H1 (cell line): ENCODE measurements at regions of chr2 and their contacts with region 1.

Region 1: DNA sequence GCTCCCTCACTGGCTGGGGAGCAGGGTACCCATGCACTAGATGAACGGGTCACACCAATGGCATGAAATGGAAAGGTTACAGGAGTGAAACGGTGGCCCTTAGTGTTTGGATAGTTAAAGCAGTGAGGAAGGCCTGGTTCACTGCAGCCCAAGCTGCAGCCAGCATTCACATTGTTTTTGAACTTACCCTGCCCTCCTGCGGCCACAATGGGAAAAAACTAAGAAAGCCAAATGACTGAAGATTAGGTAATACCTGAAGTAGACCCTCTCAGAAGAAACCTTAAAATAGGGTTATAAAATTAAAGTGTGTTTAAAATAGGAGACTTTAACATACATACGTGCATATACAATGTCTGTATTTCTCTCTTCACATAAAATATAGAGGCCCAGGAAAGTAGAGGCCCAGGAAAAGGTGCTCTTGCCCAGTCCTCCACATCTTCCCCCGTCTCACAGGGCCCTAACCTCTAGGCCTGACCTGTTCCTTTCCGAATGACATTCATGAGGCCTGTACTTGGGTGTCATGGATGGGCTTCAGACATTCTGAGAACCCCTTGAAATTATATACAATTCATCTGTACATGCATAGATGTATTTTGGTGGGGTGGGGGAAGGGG is 33.3 kb downstream of the DOK1 start:
- DNase-seq: peak; percentile 33 to 66
- H3K4me3 ChIP-seq: no peak overlapping the region
- H3K27ac ChIP-seq: no peak overlapping the region
- H3K4me1 ChIP-seq: peaks cover 0 to 2% (median under 1%) of the 10 kb centered on the region in 4 experiments; a peak in 1 of 7 replicates
- H3K27me3 ChIP-seq: no peaks in the 10 kb centered on the region
- CTCF ChIP-seq: peak; percentile 26 to 71 (median 70)
- EP300 ChIP-seq: no peak
- POLR2A ChIP-seq: no peak
- RAD21 ChIP-seq: peak; percentile 89 to 90

Region 2: GRCh38 chr2:74472086-74472944 is 115.5 kb before region 1 on chr2 and contains the start of gene MRPL53:
- CTCF ChIA-PET with region 1: interaction called, 42 read pairs
- POLR2A ChIA-PET with region 1: no interaction called
- DNase-seq: peak; percentile 84 to 94
- H3K4me3 ChIP-seq: peak within 1 kb of the TSS; percentile 77 to 95 (median 87)
- H3K27ac ChIP-seq: peak within 1 kb of the TSS; percentile 79
- H3K4me1 ChIP-seq: peaks cover 0 to 3% (median 2%) of the 10 kb centered on the region in 4 experiments; a peak in 3 of 7 replicates
- H3K27me3 ChIP-seq: no peaks in the 10 kb centered on the region
- CTCF ChIP-seq: no peak
- EP300 ChIP-seq: 0 out of 3 replicates have a peak, but pooled peaks of 1 of the 2 experiments have one; percentile 46
- POLR2A ChIP-seq: peak; percentile 80 to 95
- RAD21 ChIP-seq: no peak
- total RNA-seq, gene MRPL53: 46.3 and 50.2 TPM in 2 replicates

Region 3: GRCh38 chr2:74488644-74489481 is 98.9 kb before region 1 on chr2:
- CTCF ChIA-PET with region 1: interaction called, 45 read pairs
- POLR2A ChIA-PET with region 1: no interaction called
- DNase-seq: no peak
- H3K4me3 ChIP-seq: no peak overlapping the region
- H3K27ac ChIP-seq: no peak overlapping the region
- H3K4me1 ChIP-seq: no peaks in the 10 kb centered on the region
- H3K27me3 ChIP-seq: no peaks in the 10 kb centered on the region
- CTCF ChIP-seq: no peak
- EP300 ChIP-seq: no peak
- POLR2A ChIP-seq: no peak
- RAD21 ChIP-seq: no peak

Region 4: DNA sequence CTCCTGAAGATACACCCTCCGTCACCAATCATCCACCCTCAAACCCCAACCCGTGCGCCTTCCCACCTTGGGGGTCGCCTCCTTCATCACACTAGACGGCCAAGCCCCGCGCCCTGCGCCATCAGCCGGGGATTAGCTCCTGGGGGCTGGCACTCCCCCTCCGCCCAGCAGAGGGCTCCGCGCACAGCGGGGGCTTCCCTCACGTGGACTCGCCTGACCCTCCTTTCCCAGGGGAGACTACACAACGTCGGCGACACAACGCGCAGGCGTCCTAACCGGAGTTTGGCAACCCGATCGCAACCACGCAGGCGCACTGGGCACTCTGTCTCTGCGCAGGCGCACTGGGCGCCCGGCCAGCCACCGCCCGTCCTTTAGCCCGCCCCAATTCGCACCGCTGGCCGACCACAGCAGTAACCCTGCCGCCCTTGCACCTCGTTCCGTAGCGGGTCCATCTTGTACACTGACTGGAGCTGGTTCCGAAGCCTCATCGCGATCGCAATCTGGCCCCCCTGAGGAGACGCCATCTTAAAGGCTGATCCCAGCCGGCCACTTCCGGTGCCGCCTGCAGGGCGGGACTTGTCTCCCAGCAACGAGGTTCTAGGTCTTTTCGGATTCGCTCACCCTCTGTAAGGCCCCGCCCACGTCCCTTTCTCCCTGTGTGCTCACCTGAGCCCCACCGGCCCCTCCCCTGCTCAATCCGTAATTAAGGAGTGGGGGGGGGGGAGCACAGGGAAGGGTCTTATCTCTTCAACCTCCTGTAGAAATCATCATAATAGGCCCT is 80.4 kb before region 1 on chr2 and contains the start of gene PCGF1:
- CTCF ChIA-PET with region 1: interaction called, 16 read pairs
- POLR2A ChIA-PET with region 1: interaction called, 4 read pairs
- DNase-seq: peak; percentile 96 to 98
- H3K4me3 ChIP-seq: peak within 1 kb of the TSS; percentile 61 to 98 (median 92)
- H3K27ac ChIP-seq: peak within 1 kb of the TSS; percentile 99
- H3K4me1 ChIP-seq: peaks cover 3 to 25% (median 20%) of the 10 kb centered on the region in 4 experiments
- H3K27me3 ChIP-seq: peaks cover 48 to 80% (median 76%) of the 10 kb centered on the region in 4 experiments
- CTCF ChIP-seq: peak in 2 of 3 experiments; percentile 48 to 63; a peak in 3 of 4 replicates
- EP300 ChIP-seq: no peak
- POLR2A ChIP-seq: peak in 1 of 2 experiments; percentile 84; a peak in 2 of 3 replicates
- RAD21 ChIP-seq: peak; percentile 9 to 28; a peak in 1 of 4 replicates
- total RNA-seq, gene PCGF1: 10.0 and 13.8 TPM in 2 replicates

Region 5: DNA sequence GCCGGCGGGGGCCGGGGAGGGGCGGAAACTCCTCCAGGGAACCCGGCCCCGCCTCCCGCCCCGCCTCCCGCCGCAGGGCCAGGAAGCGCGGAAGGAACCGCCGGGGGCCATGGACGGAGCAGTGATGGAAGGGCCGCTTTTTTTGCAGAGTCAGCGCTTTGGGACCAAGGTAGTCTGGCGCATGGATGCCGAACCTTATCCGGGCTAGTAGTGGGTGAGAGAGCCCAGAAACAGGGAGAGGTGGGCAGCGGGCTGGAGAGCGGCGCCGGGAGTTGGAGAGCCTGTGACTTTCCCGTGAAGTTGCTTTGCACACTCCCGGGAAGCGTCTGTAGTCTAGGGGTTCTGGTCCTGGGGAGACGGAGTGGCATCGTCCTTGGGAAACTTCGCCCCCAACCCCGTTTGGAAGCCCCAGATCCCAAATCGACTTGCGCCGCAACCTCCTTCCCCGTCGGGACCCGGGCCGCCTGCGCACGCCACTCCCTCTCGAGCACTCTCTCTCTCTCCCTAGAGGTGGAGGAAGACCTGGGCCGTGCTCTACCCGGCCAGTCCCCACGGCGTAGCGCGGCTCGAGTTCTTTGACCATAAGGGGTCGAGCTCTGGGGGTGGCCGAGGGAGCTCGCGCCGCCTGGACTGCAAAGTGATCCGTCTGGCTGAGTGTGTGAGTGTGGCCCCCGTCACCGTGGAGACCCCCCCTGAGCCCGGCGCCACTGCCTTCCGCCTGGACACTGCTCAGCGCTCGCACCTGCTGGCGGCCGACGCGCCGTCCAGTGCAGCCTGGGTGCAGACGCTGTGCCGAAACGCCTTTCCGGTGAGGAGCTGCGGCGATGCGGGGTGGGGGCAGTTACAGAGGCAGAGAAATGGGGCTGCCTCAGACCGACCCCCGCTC is 32.9 kb before region 1 on chr2 and contains the start of gene DOK1:
- CTCF ChIA-PET with region 1: interaction called, 56 read pairs
- POLR2A ChIA-PET with region 1: interaction called, 5 read pairs
- DNase-seq: peak in 1 of 2 experiments; percentile 76
- H3K4me3 ChIP-seq: peak within 1 kb of the TSS; percentile 83 to 94 (median 90)
- H3K27ac ChIP-seq: 0 out of 2 replicates have a peak within 1 kb of the TSS, but pooled peaks have one; percentile 11
- H3K4me1 ChIP-seq: peaks cover 2 to 10% (median 7%) of the 10 kb centered on the region in 4 experiments
- H3K27me3 ChIP-seq: peaks cover 4 to 50% (median 33%) of the 10 kb centered on the region in 4 experiments
- CTCF ChIP-seq: no peak
- EP300 ChIP-seq: no peak
- POLR2A ChIP-seq: no peak; a peak in 1 of 3 replicates
- RAD21 ChIP-seq: no peak
- total RNA-seq, gene DOK1: 11.4 and 14.3 TPM in 2 replicates

Region 6: DNA sequence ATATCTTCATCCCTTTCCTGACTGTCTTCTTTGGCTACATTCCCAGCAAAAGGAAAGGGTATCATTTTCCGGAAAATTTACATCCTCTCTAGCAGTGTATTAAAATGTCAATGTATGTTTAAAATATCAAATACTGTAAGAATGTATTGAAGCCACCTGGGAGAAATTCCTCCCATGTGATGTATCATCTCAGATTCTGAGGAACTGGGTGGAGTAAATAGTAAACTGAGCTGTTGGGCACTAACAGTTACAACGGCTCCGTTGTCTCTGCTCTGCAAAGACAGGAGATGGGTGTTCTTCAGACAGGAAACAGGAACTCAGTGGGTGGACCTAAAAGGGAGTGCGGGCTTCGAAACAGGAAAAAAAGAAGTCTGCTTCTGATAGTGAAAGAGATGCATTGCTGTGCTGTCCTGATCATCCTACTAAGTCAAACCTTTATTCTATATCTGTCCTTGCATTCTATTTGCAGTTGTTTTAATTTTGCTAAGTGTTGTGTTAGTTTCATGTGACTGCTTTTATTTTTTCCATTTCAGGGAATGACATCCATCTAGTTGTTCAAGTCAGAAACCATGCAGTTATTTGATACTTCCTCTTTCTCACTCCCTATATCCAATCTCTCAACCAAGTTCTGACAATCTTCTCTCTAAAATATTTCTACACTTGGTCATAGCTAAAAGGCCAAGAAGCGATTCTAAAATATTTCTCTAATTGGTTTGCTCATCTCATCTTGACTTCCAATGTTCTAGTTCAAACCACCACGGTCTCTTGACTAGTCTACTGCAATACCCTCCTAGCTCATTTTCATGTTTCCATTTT is 13.8 kb before region 1 on chr2:
- CTCF ChIA-PET with region 1: interaction called, 158 read pairs
- POLR2A ChIA-PET with region 1: interaction called, 5 read pairs
- DNase-seq: no peak
- H3K4me3 ChIP-seq: no peak overlapping the region
- H3K27ac ChIP-seq: no peak overlapping the region
- H3K4me1 ChIP-seq: no peaks in the 10 kb centered on the region
- H3K27me3 ChIP-seq: no peaks in the 10 kb centered on the region
- CTCF ChIP-seq: no peak
- EP300 ChIP-seq: no peak
- POLR2A ChIP-seq: no peak
- RAD21 ChIP-seq: no peak

Region 7: DNA sequence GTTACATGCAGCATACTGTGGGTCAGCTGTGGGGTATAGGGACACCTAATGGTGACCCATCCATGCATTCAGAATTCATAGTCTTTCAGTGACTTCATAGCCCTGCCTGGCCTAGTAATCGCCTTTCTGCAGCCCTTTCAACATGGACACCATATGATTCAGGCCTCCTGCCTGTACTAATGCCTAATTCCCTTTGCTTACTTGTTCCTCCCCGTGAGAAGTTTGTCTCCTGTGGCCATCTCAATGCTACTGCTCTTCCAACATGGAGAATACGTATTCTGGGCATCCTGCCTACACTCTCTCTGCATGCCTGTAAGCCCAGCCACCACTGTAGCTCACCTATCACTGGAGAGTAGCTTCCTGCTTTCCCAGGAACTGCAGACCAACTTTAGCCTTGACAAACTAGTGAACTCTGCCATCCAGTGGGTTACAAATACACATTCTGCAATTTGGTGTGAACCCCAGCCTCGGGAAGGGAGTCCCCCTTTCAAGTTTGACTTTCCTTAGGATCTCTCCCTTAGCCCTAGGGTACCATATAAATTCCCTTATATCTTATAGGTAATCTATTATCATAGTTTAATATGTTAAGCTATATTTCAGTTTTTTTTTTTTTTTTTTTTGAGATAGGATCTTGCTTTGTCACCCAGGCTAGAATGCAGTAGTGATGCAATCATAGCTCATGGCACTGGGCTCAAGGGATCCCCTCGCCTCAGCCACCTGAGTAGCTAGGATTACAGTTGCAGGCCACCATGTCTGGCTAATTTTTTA is 38.1 kb after region 1 on chr2:
- CTCF ChIA-PET with region 1: no interaction called
- POLR2A ChIA-PET with region 1: no interaction called
- DNase-seq: no peak
- H3K4me3 ChIP-seq: no peak overlapping the region
- H3K27ac ChIP-seq: no peak overlapping the region
- H3K4me1 ChIP-seq: no peaks in the 10 kb centered on the region
- H3K27me3 ChIP-seq: no peaks in the 10 kb centered on the region
- CTCF ChIP-seq: no peak
- EP300 ChIP-seq: no peak
- POLR2A ChIP-seq: no peak
- RAD21 ChIP-seq: no peak

Region 8: GRCh38 chr2:74789271-74789670 is 201.5 kb after region 1 on chr2:
- CTCF ChIA-PET with region 1: no interaction called
- POLR2A ChIA-PET with region 1: no interaction called
- DNase-seq: no peak
- H3K4me3 ChIP-seq: no peak overlapping the region
- H3K27ac ChIP-seq: no peak overlapping the region
- H3K4me1 ChIP-seq: no peaks in the 10 kb centered on the region
- H3K27me3 ChIP-seq: no peaks in the 10 kb centered on the region
- CTCF ChIP-seq: no peak
- EP300 ChIP-seq: no peak
- POLR2A ChIP-seq: no peak
- RAD21 ChIP-seq: no peak